Adrenal gland (tissue), 19 donors: ENCODE measurements at regions of chr20 and their contacts with region 1.

Region 1: DNA sequence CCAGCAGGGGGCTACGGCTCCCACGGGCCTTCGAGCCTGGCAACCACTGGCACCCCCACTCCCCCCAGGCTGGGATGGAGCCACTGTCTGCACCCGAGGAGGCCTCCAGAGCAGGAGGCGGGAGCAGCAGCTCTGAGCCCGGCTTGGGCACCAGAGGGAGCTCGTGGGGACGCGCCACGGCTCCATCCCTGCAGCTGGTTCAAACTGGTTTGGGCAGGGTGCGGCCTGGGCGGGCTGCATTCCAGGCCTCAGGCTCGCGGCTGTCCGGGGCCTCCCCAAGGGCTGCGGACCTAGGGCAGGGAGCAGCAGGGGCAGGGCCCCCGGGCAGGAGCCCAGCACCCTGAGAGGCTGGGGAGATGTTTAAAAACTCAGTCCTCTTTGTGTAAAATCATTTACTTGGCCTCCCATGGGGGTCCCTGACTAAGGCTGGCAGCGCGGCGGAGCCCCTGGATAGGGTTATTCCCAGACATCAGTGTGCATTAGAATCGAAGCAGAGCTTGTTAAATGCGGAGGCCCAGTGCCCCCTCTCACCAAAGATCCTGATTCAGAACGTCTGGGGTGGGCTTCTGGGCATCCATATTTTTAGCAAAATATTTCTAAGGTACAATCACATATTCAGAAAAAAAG is 4.1 kb upstream of the BCAS4 start:
- DNase-seq: peak; percentile 84 to 89 (median 87)
- H3K4me3 ChIP-seq: no peak overlapping the region
- H3K27ac ChIP-seq: peak overlapping the region in 3 of 5 donors; percentile 20 to 71 (median 69)
- H3K4me1 ChIP-seq: peaks cover 3 to 20% of the 10 kb centered on the region in 2 donors
- H3K27me3 ChIP-seq: no peaks in the 10 kb centered on the region
- CTCF ChIP-seq: peak; percentile 44 to 70 (median 58)
- POLR2A ChIP-seq: no peak

Region 2: GRCh38 chr20:50655311-50655880 is 135.4 kb before region 1 on chr20:
- intact Hi-C with region 1: no loop called
- DNase-seq: peak in 6 of 7 donors; percentile 53 to 79 (median 66)
- H3K4me3 ChIP-seq: no peak overlapping the region
- H3K27ac ChIP-seq: peak overlapping the region in 3 of 5 donors; percentile 58 to 83 (median 68)
- H3K4me1 ChIP-seq: peaks cover 20 to 47% of the 10 kb centered on the region in 2 donors
- H3K27me3 ChIP-seq: no peaks in the 10 kb centered on the region
- CTCF ChIP-seq: no peak
- POLR2A ChIP-seq: no peak

Region 3: GRCh38 chr20:50929299-50930138 is 138.8 kb after region 1 on chr20:
- intact Hi-C with region 1: loop called in 1 of 2 experiments (anchors 5 kb)
- DNase-seq: peak; percentile 85 to 97 (median 94)
- H3K4me3 ChIP-seq: peak overlapping the region in 2 of 4 donors; percentile 67 to 78
- H3K27ac ChIP-seq: peak overlapping the region in 4 of 5 donors; percentile 54 to 91 (median 68)
- H3K4me1 ChIP-seq: peaks cover 7 to 56% of the 10 kb centered on the region in 2 donors
- H3K27me3 ChIP-seq: no peaks in the 10 kb centered on the region
- CTCF ChIP-seq: peak; percentile 70 to 96 (median 88)
- POLR2A ChIP-seq: peak in 1 of 2 donors; percentile 21

Region 4: GRCh38 chr20:51306503-51307358 is 516.0 kb after region 1 on chr20:
- intact Hi-C with region 1: loop called (anchors 5 to 10 kb)
- DNase-seq: peak; percentile 44 to 86 (median 74)
- H3K4me3 ChIP-seq: no peak overlapping the region
- H3K27ac ChIP-seq: no peak overlapping the region
- H3K4me1 ChIP-seq: no peaks in the 10 kb centered on the region
- H3K27me3 ChIP-seq: no peaks in the 10 kb centered on the region
- CTCF ChIP-seq: peak; percentile 70 to 89 (median 86)
- POLR2A ChIP-seq: no peak